ENCODE measurements at regions of chr12 and their contacts with region 1.

Region 1: DNA sequence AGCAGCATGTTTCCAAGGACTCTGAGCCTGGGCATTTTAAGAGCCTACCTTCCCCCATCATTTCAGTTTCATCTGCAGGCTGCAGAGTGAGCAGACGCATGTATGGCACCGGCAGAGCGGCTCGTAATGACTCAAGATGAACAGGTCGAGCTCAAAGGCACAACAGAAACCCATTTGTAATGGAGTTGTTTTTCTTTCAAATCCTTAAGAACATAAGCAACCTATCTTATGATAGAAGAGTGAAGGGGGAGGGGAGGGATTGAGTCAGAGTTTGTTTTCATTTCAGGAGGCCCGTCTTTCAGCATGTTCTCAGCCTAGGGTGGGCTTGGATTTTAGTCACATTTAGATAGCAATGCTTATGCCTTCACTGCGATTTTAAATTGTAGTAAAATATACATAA is 54.9 kb upstream of the CISTR start:
- DNase-seq: no peak
- H3K4me3 ChIP-seq: no peak overlapping the region
- H3K27ac ChIP-seq: no peak overlapping the region
- H3K4me1 ChIP-seq: peaks cover 0 to 3% (median 0%) of the 10 kb centered on the region in 4 experiments; a peak in 1 of 7 replicates
- H3K27me3 ChIP-seq: peaks cover 0 to 9% (median 3%) of the 10 kb centered on the region in 4 experiments; a peak in 3 of 7 replicates
- CTCF ChIP-seq: no peak
- EP300 ChIP-seq: no peak
- POLR2A ChIP-seq: no peak
- RAD21 ChIP-seq: no peak

Region 2: GRCh38 chr12:53820516-53821306 is 14.0 kb after region 1 on chr12:
- CTCF ChIA-PET with region 1: interaction called, 24 read pairs
- POLR2A ChIA-PET with region 1: interaction called, 3 read pairs
- DNase-seq: no peak
- H3K4me3 ChIP-seq: no peak overlapping the region
- H3K27ac ChIP-seq: no peak overlapping the region
- H3K4me1 ChIP-seq: no peaks in the 10 kb centered on the region
- H3K27me3 ChIP-seq: no peaks in the 10 kb centered on the region; a peak in 1 of 7 replicates
- CTCF ChIP-seq: no peak
- EP300 ChIP-seq: no peak
- POLR2A ChIP-seq: no peak
- RAD21 ChIP-seq: no peak

Region 3: GRCh38 chr12:53830621-53831020 is 23.9 kb after region 1 on chr12:
- CTCF ChIA-PET with region 1: interaction called, 11 read pairs
- POLR2A ChIA-PET with region 1: no interaction called
- DNase-seq: no peak
- H3K4me3 ChIP-seq: no peak overlapping the region
- H3K27ac ChIP-seq: no peak overlapping the region
- H3K4me1 ChIP-seq: no peaks in the 10 kb centered on the region; a peak in 1 of 7 replicates
- H3K27me3 ChIP-seq: no peaks in the 10 kb centered on the region
- CTCF ChIP-seq: no peak
- EP300 ChIP-seq: no peak
- POLR2A ChIP-seq: no peak
- RAD21 ChIP-seq: no peak

Region 4: GRCh38 chr12:53974084-53975063 is 167.7 kb after region 1 on chr12 and contains the start of gene HOTAIR:
- CTCF ChIA-PET with region 1: no interaction called
- POLR2A ChIA-PET with region 1: no interaction called
- DNase-seq: no peak
- H3K4me3 ChIP-seq: peak within 1 kb of the TSS in 1 of 4 experiments; percentile 50; a peak in 2 of 8 replicates
- H3K27ac ChIP-seq: no peak within 1 kb of the TSS
- H3K4me1 ChIP-seq: peaks cover 0 to 10% (median 4%) of the 10 kb centered on the region in 4 experiments; a peak in 6 of 7 replicates
- H3K27me3 ChIP-seq: peaks cover 98 to 100% (median 100%) of the 10 kb centered on the region in 4 experiments
- CTCF ChIP-seq: no peak
- EP300 ChIP-seq: no peak
- POLR2A ChIP-seq: no peak
- RAD21 ChIP-seq: no peak
- total RNA-seq, gene HOTAIR: not detected in 2 replicates